ENCODE measurements at regions of chr17 and their contacts with region 1.

Region 1: DNA sequence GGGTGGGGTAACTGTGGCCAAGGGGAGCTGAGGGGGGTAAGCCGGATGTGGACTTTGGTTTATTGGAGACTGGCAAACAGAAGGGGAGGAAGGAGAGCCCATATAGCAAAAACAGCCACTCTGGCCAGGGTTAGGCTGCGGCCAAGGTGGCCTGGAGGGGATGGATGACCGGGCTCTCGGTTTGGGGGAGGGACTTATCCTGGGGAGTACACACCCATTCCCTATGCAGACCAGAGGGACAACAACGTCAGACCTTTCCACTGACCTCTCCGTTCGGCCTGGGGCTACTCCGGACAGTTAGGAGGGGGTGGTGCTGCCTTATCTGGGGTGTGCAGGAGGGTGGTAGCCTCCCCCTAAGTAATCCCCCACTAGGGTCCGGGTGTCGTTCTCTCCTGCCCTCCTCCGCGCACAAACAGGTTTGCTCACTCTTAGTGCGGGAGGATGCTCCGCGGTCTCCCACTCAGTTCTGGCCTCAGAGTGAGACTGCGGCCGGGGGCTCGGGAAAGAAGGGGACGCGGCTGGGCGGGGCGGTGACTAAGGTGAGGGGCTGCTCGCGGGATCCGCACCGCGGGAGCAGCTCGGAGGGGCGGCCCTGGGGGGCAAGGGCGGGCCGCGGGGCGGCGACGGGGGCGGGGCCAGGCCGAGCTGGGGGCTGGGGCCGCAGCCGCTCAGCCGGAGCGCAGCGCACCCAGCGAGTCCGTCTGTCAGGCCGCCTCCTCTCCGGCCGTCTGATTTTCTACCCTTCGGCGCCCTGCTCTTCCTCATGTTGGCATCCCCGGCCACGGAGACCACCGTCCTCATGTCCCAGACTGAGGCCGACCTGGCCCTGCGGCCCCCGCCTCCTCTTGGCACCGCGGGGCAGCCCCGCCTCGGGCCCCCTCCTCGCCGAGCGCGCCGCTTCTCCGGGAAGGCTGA is at the start of gene WNK4:
- DNase-seq: no peak
- ATAC-seq: peak; percentile 67
- total RNA-seq, gene WNK4: 1.4 TPM

Region 2: DNA sequence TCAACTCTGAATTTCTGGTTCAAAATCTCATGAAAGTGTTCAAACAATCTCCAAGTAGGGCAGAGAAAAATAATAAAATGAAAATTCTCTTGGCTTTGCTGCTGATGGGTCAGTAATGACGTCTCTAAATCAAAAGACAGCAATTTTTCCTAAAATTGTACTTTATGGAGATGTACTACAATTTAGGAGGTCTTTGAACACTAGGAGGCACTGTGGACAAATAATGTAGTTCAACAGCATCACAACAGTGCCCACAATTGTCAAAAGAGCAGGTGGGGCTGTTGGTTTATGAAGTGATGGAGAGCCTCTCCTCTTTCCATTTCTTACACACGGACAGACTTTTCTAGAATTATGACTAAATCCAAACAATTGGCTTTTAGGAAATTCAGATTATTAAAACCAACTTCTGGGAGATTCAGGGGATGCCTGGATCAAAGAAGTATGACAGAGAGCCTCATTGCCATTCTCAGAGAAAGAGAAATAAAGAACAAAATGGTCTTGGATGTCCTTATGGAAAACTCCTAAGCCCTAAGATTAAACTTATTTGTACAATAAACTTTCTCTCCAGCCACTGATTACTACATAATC is 59.1 kb before region 1 on chr17:
- intact Hi-C with region 1: no loop called
- DNase-seq: no peak
- ATAC-seq: peak; percentile 93

Region 3: DNA sequence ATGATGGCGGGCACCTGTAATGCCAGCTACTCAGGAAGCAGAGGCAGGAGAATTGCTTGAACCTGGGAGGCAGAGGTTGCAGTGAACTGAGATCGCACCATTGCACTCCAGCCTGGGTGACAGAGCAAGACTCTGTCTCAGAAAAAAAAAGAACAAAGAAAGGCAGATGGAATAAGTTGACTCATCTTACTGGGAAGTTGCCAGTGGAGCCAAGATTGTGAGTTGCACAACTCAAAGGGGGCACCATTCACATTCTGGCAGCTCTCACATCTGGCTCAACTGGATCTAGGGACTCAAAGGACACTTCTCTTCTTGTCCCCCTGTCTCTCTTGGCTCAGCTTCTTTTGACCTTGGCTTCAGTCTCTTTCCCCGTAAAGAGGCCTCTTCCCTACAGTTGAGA is 819.6 kb after region 1 on chr17:
- intact Hi-C with region 1: loop called (anchors 5 kb)
- DNase-seq: no peak
- ATAC-seq: peak; percentile 69

Region 4: DNA sequence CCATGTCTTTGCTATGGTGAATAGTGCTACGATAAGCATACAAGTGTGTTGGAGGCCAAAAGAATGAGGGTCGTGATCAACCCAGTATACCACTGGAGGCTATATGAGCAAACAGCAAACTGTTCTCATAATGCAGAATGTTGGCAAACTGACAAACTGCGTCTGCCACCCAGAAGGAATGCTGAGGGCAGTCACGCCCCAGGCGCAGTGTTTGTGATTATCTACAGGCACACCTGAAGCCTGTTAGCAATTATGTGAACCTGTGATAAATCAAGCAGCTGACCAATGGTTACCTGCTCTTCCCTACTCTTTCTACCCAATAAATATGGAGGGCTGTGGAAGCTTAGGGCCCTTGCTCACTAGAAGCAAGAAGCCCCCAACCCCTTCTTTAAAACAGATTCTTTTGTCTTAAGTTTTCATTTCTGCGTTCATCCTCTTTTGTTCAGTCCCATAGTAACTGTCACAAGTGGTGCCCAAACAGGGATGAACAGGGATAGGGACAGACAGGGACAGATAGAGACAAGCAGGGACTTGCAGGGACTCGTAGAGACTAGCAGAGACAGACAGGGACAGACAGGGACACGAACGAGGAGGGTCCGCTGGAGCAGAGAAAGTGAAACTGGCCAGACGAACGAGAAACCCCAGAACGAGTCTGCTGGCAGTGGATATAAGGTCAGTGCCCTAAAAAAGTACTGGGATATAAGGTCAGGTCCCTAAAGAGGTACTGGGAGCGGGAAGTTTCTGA is 1091.9 kb after region 1 on chr17:
- intact Hi-C with region 1: no loop called
- DNase-seq: peak; percentile 27
- ATAC-seq: no peak